IMR-90 (cell line): ENCODE measurements at regions of chr1 and their contacts with region 1.

Region 1: GRCh38 chr1:92817986-92818764 is 13.7 kb upstream of the RPL5 start:
- DNase-seq: no peak
- ATAC-seq: no peak
- H3K4me3 ChIP-seq: no peak overlapping the region
- H3K27ac ChIP-seq: no peak overlapping the region
- H3K4me1 ChIP-seq: peaks cover 5% of the 10 kb centered on the region; the same call in 1 of the 2 replicates
- H3K27me3 ChIP-seq: no peaks in the 10 kb centered on the region
- CTCF ChIP-seq: peak; percentile 61
- POLR2A ChIP-seq: no peak
- RAD21 ChIP-seq: peak; percentile 70

Region 2: DNA sequence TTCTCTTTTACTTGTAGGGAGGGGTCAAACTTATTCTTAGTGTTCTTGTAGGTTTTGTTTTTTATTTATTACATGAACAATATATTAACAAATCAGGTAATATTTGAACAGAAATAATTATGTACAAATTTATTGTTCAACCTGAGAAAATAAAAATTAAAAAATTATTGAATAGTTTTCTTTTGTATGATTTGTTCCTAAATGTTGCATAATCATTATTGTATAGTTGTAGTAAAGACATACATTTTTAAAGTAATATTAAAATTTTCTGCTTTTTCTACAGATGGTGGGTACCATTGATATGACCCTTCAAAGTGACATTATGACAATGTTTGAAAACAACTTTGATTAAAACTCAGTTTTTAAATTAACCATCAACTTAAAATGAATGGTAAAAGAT is 804.3 kb before region 1 on chr1:
- CTCF ChIA-PET with region 1: no interaction called
- POLR2A ChIA-PET with region 1: no interaction called
- dilution Hi-C with region 1: no loop called
- in situ Hi-C with region 1: no loop called
- intact Hi-C with region 1: no loop called
- DNase-seq: no peak
- ATAC-seq: no peak
- H3K4me3 ChIP-seq: no peak overlapping the region
- H3K27ac ChIP-seq: no peak overlapping the region
- H3K4me1 ChIP-seq: no peaks in the 10 kb centered on the region
- H3K27me3 ChIP-seq: no peaks in the 10 kb centered on the region
- CTCF ChIP-seq: no peak
- POLR2A ChIP-seq: no peak
- RAD21 ChIP-seq: no peak

Region 3: DNA sequence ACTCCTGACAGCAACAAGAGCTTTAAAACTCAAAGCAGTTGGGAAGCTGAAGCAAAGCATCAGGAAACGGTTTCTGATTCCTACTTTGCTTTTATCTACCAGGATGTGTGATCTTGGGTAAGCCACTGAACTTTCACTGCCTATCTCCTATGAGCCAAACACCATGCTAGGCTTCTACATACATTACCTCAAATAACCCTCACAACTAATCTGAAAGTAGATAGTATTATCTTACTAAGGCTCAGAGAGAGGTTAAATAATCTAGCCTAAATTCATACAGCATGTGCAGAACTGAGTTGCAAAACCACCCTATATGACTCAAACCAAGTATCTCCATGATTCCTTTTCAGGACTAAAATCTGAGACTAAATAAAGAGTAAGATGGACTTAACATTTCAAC is 117.0 kb before region 1 on chr1:
- CTCF ChIA-PET with region 1: no interaction called
- POLR2A ChIA-PET with region 1: no interaction called
- dilution Hi-C with region 1: no loop called
- in situ Hi-C with region 1: no loop called
- intact Hi-C with region 1: no loop called
- DNase-seq: peak; percentile 77
- ATAC-seq: peak; percentile 85
- H3K4me3 ChIP-seq: no peak overlapping the region
- H3K27ac ChIP-seq: no peak overlapping the region
- H3K4me1 ChIP-seq: no peaks in the 10 kb centered on the region; the same call in 1 of the 2 replicates
- H3K27me3 ChIP-seq: no peaks in the 10 kb centered on the region
- CTCF ChIP-seq: no peak
- POLR2A ChIP-seq: no peak
- RAD21 ChIP-seq: no peak

Region 4: GRCh38 chr1:92749024-92749634 is 69.0 kb before region 1 on chr1:
- CTCF ChIA-PET with region 1: interaction called, 7 read pairs
- POLR2A ChIA-PET with region 1: no interaction called
- dilution Hi-C with region 1: no loop called
- in situ Hi-C with region 1: no loop called
- intact Hi-C with region 1: loop called (anchors 1 kb)
- DNase-seq: peak; percentile 75
- ATAC-seq: peak; percentile 31; the same call in 1 of the 2 replicates
- H3K4me3 ChIP-seq: no peak overlapping the region
- H3K27ac ChIP-seq: no peak overlapping the region
- H3K4me1 ChIP-seq: peaks cover 6% of the 10 kb centered on the region
- H3K27me3 ChIP-seq: no peaks in the 10 kb centered on the region
- CTCF ChIP-seq: peak; percentile 76
- POLR2A ChIP-seq: no peak
- RAD21 ChIP-seq: peak; percentile 72

Region 5: GRCh38 chr1:93244298-93245069 is 426.3 kb after region 1 on chr1:
- CTCF ChIA-PET with region 1: no interaction called
- POLR2A ChIA-PET with region 1: interaction called, 10 read pairs
- dilution Hi-C with region 1: no loop called
- in situ Hi-C with region 1: no loop called
- intact Hi-C with region 1: no loop called
- DNase-seq: no peak
- ATAC-seq: no peak
- H3K4me3 ChIP-seq: no peak overlapping the region
- H3K27ac ChIP-seq: no peak overlapping the region
- H3K4me1 ChIP-seq: peaks cover 2% of the 10 kb centered on the region; the same call in 1 of the 2 replicates
- H3K27me3 ChIP-seq: no peaks in the 10 kb centered on the region
- CTCF ChIP-seq: no peak
- POLR2A ChIP-seq: no peak
- RAD21 ChIP-seq: no peak